PC-3 (cell line): ENCODE measurements at regions of chr12 and their contacts with region 1.

Region 1: DNA sequence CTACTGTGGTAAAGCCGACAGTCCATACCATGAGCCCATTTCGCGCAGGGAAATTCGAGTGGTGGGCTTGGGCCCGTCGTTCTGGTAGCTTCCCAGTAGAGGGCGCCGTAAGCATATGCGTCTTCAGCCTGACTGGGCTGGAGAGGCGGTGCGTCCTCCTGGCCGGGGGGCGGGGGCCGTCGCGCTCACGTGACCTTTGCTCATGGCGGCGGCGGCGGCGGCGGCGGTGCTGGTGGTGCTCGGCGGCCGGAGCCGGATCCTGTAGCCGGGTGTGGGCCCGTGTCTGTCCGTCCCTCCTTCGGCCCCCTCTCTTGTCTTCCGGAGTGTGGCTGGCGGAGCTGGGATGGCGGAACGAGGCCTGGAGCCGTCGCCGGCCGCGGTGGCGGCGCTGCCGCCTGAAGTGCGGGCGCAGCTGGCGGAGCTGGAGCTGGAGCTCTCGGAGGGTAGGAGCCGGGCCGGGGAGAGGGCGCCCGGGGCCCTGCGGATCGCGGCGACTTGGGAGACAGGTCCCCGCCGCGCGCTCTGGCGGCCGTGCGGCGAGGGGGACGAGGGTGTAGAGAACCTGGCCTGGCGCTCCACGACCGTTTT is at the start of gene DIP2B:
- DNase-seq: peak; percentile 96
- ATAC-seq: peak; percentile 80
- H3K4me3 ChIP-seq: peak within 1 kb of the TSS; percentile 88
- H3K27ac ChIP-seq: peak within 1 kb of the TSS; percentile 89
- H3K4me1 ChIP-seq: peaks cover 39% of the 10 kb centered on the region
- H3K27me3 ChIP-seq: no peaks in the 10 kb centered on the region
- CTCF ChIP-seq: peak; percentile 84
- total RNA-seq, gene DIP2B: 36.3 and 39.6 TPM in 2 replicates

Region 2: DNA sequence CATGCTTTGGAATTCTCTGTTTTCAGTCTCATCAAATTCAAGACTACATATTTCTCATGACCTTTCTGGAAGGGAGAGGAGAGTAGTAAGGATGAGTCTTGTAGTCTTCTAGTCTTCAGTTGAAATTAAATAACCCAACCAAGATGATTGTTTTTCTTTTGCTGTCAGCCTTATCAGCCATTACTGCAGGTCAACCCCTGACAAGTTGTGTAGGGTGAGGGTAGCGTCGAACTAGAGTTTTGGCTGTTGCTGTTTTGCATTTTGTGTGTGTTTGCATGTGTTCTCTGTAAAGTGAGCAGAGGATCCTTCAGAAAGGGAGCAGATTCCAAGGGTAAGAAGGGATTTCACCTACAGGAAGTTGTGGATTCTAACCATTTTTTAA is 28.3 kb after region 1 on chr12:
- CTCF ChIA-PET with region 1: interaction called, 4 read pairs
- POLR2A ChIA-PET with region 1: interaction called, 5 read pairs
- intact Hi-C with region 1: loop called (anchors 2 kb)
- DNase-seq: peak; percentile 52
- ATAC-seq: peak; percentile 4
- H3K4me3 ChIP-seq: peak overlapping the region; percentile 27; the same call in 1 of the 2 replicates
- H3K27ac ChIP-seq: peak overlapping the region; percentile 99
- H3K4me1 ChIP-seq: peaks cover 82% of the 10 kb centered on the region
- H3K27me3 ChIP-seq: no peaks in the 10 kb centered on the region
- CTCF ChIP-seq: no peak

Region 3: GRCh38 chr12:50597200-50598195 is 92.6 kb after region 1 on chr12:
- CTCF ChIA-PET with region 1: interaction called, 3 read pairs
- POLR2A ChIA-PET with region 1: interaction called, 11 read pairs
- intact Hi-C with region 1: loop called (anchors 2 kb)
- DNase-seq: peak; percentile 83
- ATAC-seq: peak; percentile 98
- H3K4me3 ChIP-seq: peak overlapping the region; percentile 25; the same call in 1 of the 2 replicates
- H3K27ac ChIP-seq: peak overlapping the region; percentile 61
- H3K4me1 ChIP-seq: peaks cover 15% of the 10 kb centered on the region
- H3K27me3 ChIP-seq: no peaks in the 10 kb centered on the region
- CTCF ChIP-seq: peak; percentile 47; the same call in 1 of the 2 replicates

Region 4: GRCh38 chr12:50637870-50638481 is 133.1 kb after region 1 on chr12:
- CTCF ChIA-PET with region 1: interaction called, 14 read pairs
- POLR2A ChIA-PET with region 1: no interaction called
- intact Hi-C with region 1: loop called (anchors 1 kb)
- DNase-seq: peak; percentile 73
- ATAC-seq: no peak
- H3K4me3 ChIP-seq: no peak overlapping the region
- H3K27ac ChIP-seq: peak overlapping the region; percentile 22
- H3K4me1 ChIP-seq: peaks cover 54% of the 10 kb centered on the region
- H3K27me3 ChIP-seq: no peaks in the 10 kb centered on the region
- CTCF ChIP-seq: peak; percentile 88

Region 5: GRCh38 chr12:50677858-50678257 is 173.0 kb after region 1 on chr12:
- CTCF ChIA-PET with region 1: no interaction called
- POLR2A ChIA-PET with region 1: no interaction called
- intact Hi-C with region 1: loop called (anchors 1 kb)
- DNase-seq: peak; percentile 93
- ATAC-seq: peak; percentile 75
- H3K4me3 ChIP-seq: no peak overlapping the region
- H3K27ac ChIP-seq: peak overlapping the region; percentile 88
- H3K4me1 ChIP-seq: peaks cover 67% of the 10 kb centered on the region
- H3K27me3 ChIP-seq: no peaks in the 10 kb centered on the region
- CTCF ChIP-seq: no peak

Region 6: GRCh38 chr12:50734409-50735263 is 229.7 kb after region 1 on chr12:
- CTCF ChIA-PET with region 1: no interaction called
- POLR2A ChIA-PET with region 1: no interaction called
- intact Hi-C with region 1: loop called (anchors 10 kb)
- DNase-seq: peak; percentile 63
- ATAC-seq: peak; percentile 12; the same call in 1 of the 2 replicates
- H3K4me3 ChIP-seq: no peak overlapping the region
- H3K27ac ChIP-seq: no peak overlapping the region
- H3K4me1 ChIP-seq: peaks cover 17% of the 10 kb centered on the region
- H3K27me3 ChIP-seq: no peaks in the 10 kb centered on the region
- CTCF ChIP-seq: peak; percentile 81

Region 7: GRCh38 chr12:50763639-50764285 is 258.9 kb after region 1 on chr12 and contains the start of gene ATF1:
- CTCF ChIA-PET with region 1: interaction called, 3 read pairs
- POLR2A ChIA-PET with region 1: no interaction called
- intact Hi-C with region 1: loop called (anchors 10 kb)
- DNase-seq: peak; percentile 91
- ATAC-seq: peak; percentile 83
- H3K4me3 ChIP-seq: peak within 1 kb of the TSS; percentile 91
- H3K27ac ChIP-seq: peak within 1 kb of the TSS; percentile 97
- H3K4me1 ChIP-seq: peaks cover 25% of the 10 kb centered on the region
- H3K27me3 ChIP-seq: no peaks in the 10 kb centered on the region
- CTCF ChIP-seq: no peak
- total RNA-seq, gene ATF1: 46.7 and 67.2 TPM in 2 replicates